ENCODE measurements at regions of chr11 and their contacts with region 1.

Region 1: DNA sequence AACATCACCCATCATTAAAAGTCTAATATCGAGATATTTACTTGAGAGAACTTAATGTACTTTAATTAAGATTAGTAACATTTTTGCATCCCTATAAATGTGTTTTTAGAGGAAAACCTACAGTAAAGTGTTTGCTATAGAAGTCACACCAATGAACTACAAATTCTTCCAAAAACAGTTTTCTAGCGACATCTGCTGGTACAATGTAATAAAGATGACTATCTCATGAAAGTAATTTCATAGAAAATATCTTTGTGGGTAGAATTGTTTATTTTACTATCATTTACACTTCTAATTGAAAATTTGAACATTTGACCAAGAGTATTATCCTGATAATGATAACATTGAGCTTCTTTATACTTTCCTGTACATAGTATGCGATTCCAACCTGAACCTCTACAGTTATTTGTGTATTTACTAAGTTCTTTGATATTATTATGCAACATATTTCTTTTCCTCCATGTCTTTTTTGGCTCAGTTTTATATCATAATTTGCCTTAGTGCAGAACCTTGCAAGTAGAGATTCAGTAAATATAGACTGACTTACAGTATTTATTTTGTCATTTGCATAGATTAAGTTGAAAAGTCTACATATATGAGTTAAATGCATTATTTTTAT is 252.7 kb downstream of the TMEM135 start:
- DNase-seq: peak; percentile 63 to 79 (median 73)
- H3K4me3 ChIP-seq: no peak overlapping the region
- H3K27ac ChIP-seq: no peak overlapping the region
- H3K4me1 ChIP-seq: no peaks in the 10 kb centered on the region
- H3K27me3 ChIP-seq: no peaks in the 10 kb centered on the region

Region 2: GRCh38 chr11:87300640-87301380 is 10.4 kb after region 1 on chr11:
- CTCF ChIA-PET with region 1: interaction called, 10 read pairs
- POLR2A ChIA-PET with region 1: no interaction called
- DNase-seq: peak in 2 of 3 donors; percentile 19 to 55
- H3K4me3 ChIP-seq: no peak overlapping the region
- H3K27ac ChIP-seq: no peak overlapping the region
- H3K4me1 ChIP-seq: no peaks in the 10 kb centered on the region
- H3K27me3 ChIP-seq: no peaks in the 10 kb centered on the region

Region 3: DNA sequence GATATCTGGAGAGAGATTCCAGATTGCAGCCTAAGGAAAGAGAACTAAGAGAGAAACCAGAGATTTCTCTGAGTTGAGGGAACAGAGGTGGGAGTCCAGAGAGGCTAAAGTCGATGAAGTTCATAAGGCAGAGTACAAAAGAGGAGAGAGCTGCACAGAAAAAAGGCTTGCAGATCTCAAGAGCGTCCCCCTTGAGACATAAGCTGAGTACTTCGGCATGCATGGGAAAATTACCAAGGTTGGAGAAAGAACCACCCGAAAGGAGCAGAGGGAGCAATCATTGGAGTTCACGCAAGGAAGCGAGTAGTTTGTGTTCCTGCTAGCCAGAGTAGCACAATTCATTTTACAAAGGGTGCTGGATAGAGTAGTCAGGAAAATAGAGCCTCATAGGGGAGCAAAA is 40.9 kb after region 1 on chr11:
- CTCF ChIA-PET with region 1: no interaction called
- POLR2A ChIA-PET with region 1: no interaction called
- DNase-seq: no peak
- H3K4me3 ChIP-seq: no peak overlapping the region
- H3K27ac ChIP-seq: no peak overlapping the region
- H3K4me1 ChIP-seq: no peaks in the 10 kb centered on the region
- H3K27me3 ChIP-seq: no peaks in the 10 kb centered on the region

Region 4: GRCh38 chr11:87778357-87778756 is 487.9 kb after region 1 on chr11:
- CTCF ChIA-PET with region 1: no interaction called
- POLR2A ChIA-PET with region 1: no interaction called
- DNase-seq: no peak
- H3K4me3 ChIP-seq: no peak overlapping the region
- H3K27ac ChIP-seq: no peak overlapping the region
- H3K4me1 ChIP-seq: no peaks in the 10 kb centered on the region
- H3K27me3 ChIP-seq: no peaks in the 10 kb centered on the region